CD4-positive, alpha-beta T cell (primary cell): ENCODE measurements at regions of chr7 and their contacts with region 1.

Region 1: GRCh38 chr7:107168233-107169119 is at the start of gene HBP1:
- DNase-seq: peak; percentile 95 to 100 (median 96)
- ATAC-seq: peak; percentile 76
- H3K4me3 ChIP-seq: peak within 1 kb of the TSS; percentile 87
- H3K4me3 Mint-ChIP-seq: peak within 1 kb of the TSS; percentile 99
- H3K27ac ChIP-seq: peak within 1 kb of the TSS; percentile 98 to 99
- H3K27ac Mint-ChIP-seq: peak within 1 kb of the TSS; percentile 98
- H3K4me1 ChIP-seq: peaks cover 20% of the 10 kb centered on the region
- H3K4me1 Mint-ChIP-seq: peaks cover 51% of the 10 kb centered on the region
- H3K27me3 ChIP-seq: no peaks in the 10 kb centered on the region
- H3K27me3 Mint-ChIP-seq: no peaks in the 10 kb centered on the region
- CTCF ChIP-seq: no peak
- total RNA-seq, gene HBP1: 238 to 242 TPM

Region 2: DNA sequence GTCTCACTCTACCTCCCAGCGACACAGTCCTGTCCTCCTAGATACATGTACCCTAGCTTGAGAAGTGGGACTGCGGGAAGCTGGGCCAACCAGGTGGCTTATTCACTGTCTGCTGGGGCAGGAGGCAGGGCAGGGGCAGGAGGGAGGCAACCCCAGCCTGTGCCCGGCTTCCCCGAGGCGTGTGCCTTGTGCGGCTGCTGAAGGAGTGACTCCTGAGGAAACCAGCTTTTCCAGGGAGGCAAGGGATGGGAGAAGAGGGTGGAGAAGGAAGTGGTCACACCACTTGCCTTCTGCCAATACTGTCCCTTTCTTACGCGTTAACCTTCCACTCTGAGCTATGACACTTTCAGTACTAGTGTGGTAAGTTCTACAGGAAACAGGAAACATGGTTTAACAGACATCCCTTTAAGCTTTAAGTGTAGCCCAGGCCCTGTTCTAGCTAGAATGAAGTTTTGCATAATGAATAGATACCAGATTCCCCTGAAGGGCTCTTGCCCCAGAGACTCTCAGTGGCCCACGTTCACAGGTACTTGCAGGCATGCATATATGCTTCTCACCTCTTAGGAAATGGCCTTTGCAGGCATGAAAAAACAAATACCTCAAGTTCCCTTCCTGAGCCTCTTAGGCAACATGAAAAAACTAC is 1097.0 kb before region 1 on chr7:
- CTCF ChIA-PET with region 1: no interaction called
- POLR2A ChIA-PET with region 1: interaction called, 13 read pairs
- intact Hi-C with region 1: no loop called
- DNase-seq: peak in 13 of 14 experiments; percentile 11 to 83 (median 34)
- ATAC-seq: peak; percentile 95
- H3K4me3 ChIP-seq: peak overlapping the region; percentile 44
- H3K4me3 Mint-ChIP-seq: peak overlapping the region; percentile 54
- H3K27ac ChIP-seq: peak overlapping the region; percentile 79 to 86
- H3K27ac Mint-ChIP-seq: peak overlapping the region; percentile 95
- H3K4me1 ChIP-seq: peaks cover 44% of the 10 kb centered on the region
- H3K4me1 Mint-ChIP-seq: peaks cover 63% of the 10 kb centered on the region
- H3K27me3 ChIP-seq: no peaks in the 10 kb centered on the region
- H3K27me3 Mint-ChIP-seq: no peaks in the 10 kb centered on the region
- CTCF ChIP-seq: no peak

Region 3: DNA sequence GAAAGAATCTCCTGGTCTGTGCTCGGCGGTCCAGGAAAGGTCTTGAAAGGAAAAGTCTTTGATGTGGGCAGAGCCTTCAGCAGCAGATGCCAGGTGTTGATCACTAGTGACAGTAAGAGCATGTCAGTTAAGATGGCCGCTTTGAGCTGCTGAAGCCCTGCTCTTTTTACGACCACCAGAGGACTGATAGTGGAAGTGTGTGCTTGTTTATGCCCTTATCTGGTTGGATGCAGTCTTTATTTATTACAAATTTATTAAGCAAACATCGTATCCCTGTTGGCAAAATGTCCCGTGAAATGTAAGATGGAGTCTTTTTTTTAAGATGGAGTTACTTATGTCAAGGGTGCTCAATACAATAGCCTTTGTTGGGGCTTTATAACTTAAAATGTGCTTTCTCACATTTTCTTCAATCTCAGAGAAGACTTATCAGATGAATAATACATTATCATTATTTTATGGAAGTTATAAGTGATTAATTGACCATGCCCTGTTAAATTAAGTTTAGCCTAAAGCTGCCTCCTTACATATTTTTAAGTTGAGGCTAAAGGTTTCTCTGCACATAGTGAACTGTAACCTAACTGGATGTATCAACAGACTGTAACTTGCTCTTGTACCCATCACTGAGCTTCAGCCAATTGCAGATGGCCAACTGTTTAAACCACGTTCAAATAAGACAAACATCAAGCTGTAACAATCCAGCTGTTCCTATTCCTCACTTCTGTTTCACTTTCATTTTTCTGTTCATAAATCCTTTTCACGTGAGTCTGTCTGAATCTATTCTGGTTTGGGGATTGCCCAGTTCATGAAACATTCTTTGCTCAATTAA is 400.8 kb before region 1 on chr7:
- CTCF ChIA-PET with region 1: no interaction called
- POLR2A ChIA-PET with region 1: interaction called, 19 read pairs
- intact Hi-C with region 1: no loop called
- DNase-seq: peak in 4 of 14 experiments; percentile 4 to 53 (median 46)
- ATAC-seq: peak; percentile 55
- H3K4me3 ChIP-seq: peak overlapping the region; percentile 3
- H3K4me3 Mint-ChIP-seq: peak overlapping the region; percentile 71
- H3K27ac ChIP-seq: no peak overlapping the region
- H3K27ac Mint-ChIP-seq: peak overlapping the region; percentile 59
- H3K4me1 ChIP-seq: peaks cover 13% of the 10 kb centered on the region
- H3K4me1 Mint-ChIP-seq: peaks cover 27% of the 10 kb centered on the region
- H3K27me3 ChIP-seq: no peaks in the 10 kb centered on the region
- H3K27me3 Mint-ChIP-seq: no peaks in the 10 kb centered on the region
- CTCF ChIP-seq: no peak

Region 4: GRCh38 chr7:107130487-107131225 is 37.8 kb before region 1 on chr7:
- CTCF ChIA-PET with region 1: interaction called, 3 read pairs
- POLR2A ChIA-PET with region 1: interaction called, 73 read pairs
- intact Hi-C with region 1: loop called in 1 of 2 experiments (anchors 2 kb)
- DNase-seq: no peak
- ATAC-seq: no peak
- H3K4me3 ChIP-seq: no peak overlapping the region
- H3K4me3 Mint-ChIP-seq: no peak overlapping the region
- H3K27ac ChIP-seq: no peak overlapping the region
- H3K27ac Mint-ChIP-seq: no peak overlapping the region
- H3K4me1 ChIP-seq: peaks cover 11% of the 10 kb centered on the region
- H3K4me1 Mint-ChIP-seq: peaks cover 19% of the 10 kb centered on the region
- H3K27me3 ChIP-seq: no peaks in the 10 kb centered on the region
- H3K27me3 Mint-ChIP-seq: no peaks in the 10 kb centered on the region
- CTCF ChIP-seq: no peak

Region 5: GRCh38 chr7:107194049-107194448 is 25.6 kb after region 1 on chr7:
- CTCF ChIA-PET with region 1: interaction called, 3 read pairs
- POLR2A ChIA-PET with region 1: interaction called, 50 read pairs
- intact Hi-C with region 1: no loop called
- DNase-seq: no peak
- ATAC-seq: no peak
- H3K4me3 ChIP-seq: no peak overlapping the region
- H3K4me3 Mint-ChIP-seq: no peak overlapping the region
- H3K27ac ChIP-seq: no peak overlapping the region
- H3K27ac Mint-ChIP-seq: peak overlapping the region; percentile 40
- H3K4me1 ChIP-seq: no peaks in the 10 kb centered on the region
- H3K4me1 Mint-ChIP-seq: peaks cover 4% of the 10 kb centered on the region
- H3K27me3 ChIP-seq: no peaks in the 10 kb centered on the region
- H3K27me3 Mint-ChIP-seq: no peaks in the 10 kb centered on the region
- CTCF ChIP-seq: no peak

Region 6: DNA sequence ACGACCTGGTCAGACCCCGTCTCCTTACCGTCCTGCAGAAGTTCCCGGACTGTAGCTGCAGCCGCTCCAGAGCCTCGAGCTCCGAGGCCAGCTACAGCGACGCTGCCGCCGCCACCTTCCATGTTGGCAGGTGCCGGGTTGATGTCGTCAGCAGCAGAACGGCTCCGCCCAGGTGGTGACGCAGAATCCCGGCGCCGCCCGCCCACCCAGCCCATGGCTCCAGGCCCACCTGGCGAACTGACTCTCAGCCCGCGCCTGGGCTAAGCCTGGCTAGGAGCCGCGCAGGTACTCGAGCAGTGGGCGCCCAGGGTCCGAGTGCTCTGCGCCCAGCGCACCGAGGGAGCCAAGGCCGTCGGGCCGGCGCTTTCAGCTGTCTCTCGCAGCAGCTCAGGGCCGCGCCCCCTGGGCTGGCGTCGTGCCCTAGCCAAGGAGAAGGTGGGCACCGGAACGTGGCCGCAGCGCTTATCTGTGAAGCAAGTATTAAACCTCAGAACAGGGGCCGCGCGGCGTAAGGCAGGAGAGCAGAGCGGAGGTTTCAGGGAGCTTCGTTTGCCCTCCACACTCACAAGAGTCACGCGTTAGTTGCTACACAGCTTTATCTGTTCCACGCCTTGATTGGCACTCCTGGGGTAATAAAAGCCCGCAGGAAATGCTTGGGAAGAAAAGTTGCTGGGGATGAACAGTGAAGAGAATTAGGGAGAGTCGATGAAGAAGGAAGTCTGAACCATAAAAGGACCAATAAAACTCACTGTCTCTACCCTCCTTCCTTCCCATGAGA is 395.5 kb after region 1 on chr7 and contains the starts of genes COG5 and DUS4L:
- CTCF ChIA-PET with region 1: no interaction called
- POLR2A ChIA-PET with region 1: interaction called, 26 read pairs
- intact Hi-C with region 1: loop called in 1 of 2 experiments (anchors 5 kb)
- DNase-seq: peak; percentile 69 to 94 (median 80)
- ATAC-seq: peak; percentile 85
- H3K4me3 ChIP-seq: peak within 1 kb of the TSS; percentile 83
- H3K4me3 Mint-ChIP-seq: peak within 1 kb of the TSS; percentile 93
- H3K27ac ChIP-seq: peak within 1 kb of the TSS; percentile 87 to 90
- H3K27ac Mint-ChIP-seq: peak within 1 kb of the TSS; percentile 94
- H3K4me1 ChIP-seq: peaks cover 35% of the 10 kb centered on the region
- H3K4me1 Mint-ChIP-seq: peaks cover 70% of the 10 kb centered on the region
- H3K27me3 ChIP-seq: no peaks in the 10 kb centered on the region
- H3K27me3 Mint-ChIP-seq: no peaks in the 10 kb centered on the region
- CTCF ChIP-seq: no peak
- total RNA-seq, gene COG5: 43.4 to 44.5 TPM
- total RNA-seq, gene DUS4L: 14.3 to 14.4 TPM

Region 7: DNA sequence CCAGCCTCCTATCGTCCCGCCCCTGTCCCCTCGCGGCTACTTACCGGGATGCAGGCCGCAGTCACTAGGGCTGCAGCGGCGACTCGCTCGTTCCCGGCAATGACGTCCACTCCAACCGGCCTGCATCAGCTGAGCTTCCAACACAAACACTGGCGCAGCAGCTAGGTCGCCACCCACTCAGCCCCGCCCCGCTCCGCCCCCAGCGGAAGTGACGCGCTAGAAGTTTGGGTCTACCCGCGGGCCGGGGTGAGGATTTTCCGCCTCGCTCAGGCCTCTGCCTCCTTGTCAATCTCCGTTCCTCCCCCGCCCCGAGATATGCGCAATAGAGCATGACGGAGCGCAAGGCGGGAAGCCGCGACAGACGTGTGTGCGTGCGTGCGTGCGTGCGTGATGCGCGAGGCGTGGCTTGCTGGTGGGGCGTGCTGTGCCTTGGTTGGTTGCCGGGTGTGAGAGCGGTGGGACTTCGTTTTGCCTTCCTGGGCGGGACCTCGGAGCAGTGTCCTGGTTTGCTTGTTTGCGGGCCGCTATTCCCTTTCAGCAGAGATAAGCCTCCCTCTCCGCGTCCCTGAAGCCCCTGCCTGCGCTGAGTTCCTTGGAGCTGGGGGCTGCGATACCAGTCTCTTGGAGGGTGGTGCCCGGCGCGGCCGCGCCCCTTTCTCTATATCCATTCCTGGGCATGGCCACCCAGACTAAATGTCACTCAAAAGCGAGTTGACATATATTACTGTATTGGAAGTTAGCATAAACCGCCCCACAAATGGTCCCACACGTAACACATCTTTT is 1357.7 kb after region 1 on chr7 and contains the start of gene PNPLA8:
- CTCF ChIA-PET with region 1: no interaction called
- POLR2A ChIA-PET with region 1: interaction called, 11 read pairs
- intact Hi-C with region 1: loop called in 1 of 2 experiments (anchors 10 kb)
- DNase-seq: peak; percentile 99 to 100 (median 100)
- ATAC-seq: peak; percentile 88
- H3K4me3 ChIP-seq: peak within 1 kb of the TSS; percentile 88
- H3K4me3 Mint-ChIP-seq: peak within 1 kb of the TSS; percentile 91
- H3K27ac ChIP-seq: peak within 1 kb of the TSS; percentile 92 to 99
- H3K27ac Mint-ChIP-seq: peak within 1 kb of the TSS; percentile 96
- H3K4me1 ChIP-seq: peaks cover 21% of the 10 kb centered on the region
- H3K4me1 Mint-ChIP-seq: peaks cover 49% of the 10 kb centered on the region
- H3K27me3 ChIP-seq: no peaks in the 10 kb centered on the region
- H3K27me3 Mint-ChIP-seq: no peaks in the 10 kb centered on the region
- CTCF ChIP-seq: no peak
- total RNA-seq, gene PNPLA8: 85.9 to 88.6 TPM